ENCODE measurements at regions of chr2 and their contacts with region 1.

Region 1: GRCh38 chr2:205766779-205767359 is 84.6 kb downstream of the NRP2 start:
- DNase-seq: peak; percentile 45 to 69
- ATAC-seq: peak in 1 of 4 donors; percentile 45
- H3K4me3 ChIP-seq: no peak overlapping the region
- H3K27ac ChIP-seq: no peak overlapping the region
- H3K4me1 ChIP-seq: no peaks in the 10 kb centered on the region
- H3K27me3 ChIP-seq: peaks cover 0 to 14% (median 4%) of the 10 kb centered on the region in 3 donors
- CTCF ChIP-seq: peak; percentile 82

Region 2: GRCh38 chr2:205721057-205721449 is 45.8 kb before region 1 on chr2:
- intact Hi-C with region 1: no loop called
- DNase-seq: no peak
- ATAC-seq: no peak
- H3K4me3 ChIP-seq: no peak overlapping the region
- H3K27ac ChIP-seq: no peak overlapping the region
- H3K4me1 ChIP-seq: no peaks in the 10 kb centered on the region
- H3K27me3 ChIP-seq: no peaks in the 10 kb centered on the region
- CTCF ChIP-seq: no peak

Region 3: DNA sequence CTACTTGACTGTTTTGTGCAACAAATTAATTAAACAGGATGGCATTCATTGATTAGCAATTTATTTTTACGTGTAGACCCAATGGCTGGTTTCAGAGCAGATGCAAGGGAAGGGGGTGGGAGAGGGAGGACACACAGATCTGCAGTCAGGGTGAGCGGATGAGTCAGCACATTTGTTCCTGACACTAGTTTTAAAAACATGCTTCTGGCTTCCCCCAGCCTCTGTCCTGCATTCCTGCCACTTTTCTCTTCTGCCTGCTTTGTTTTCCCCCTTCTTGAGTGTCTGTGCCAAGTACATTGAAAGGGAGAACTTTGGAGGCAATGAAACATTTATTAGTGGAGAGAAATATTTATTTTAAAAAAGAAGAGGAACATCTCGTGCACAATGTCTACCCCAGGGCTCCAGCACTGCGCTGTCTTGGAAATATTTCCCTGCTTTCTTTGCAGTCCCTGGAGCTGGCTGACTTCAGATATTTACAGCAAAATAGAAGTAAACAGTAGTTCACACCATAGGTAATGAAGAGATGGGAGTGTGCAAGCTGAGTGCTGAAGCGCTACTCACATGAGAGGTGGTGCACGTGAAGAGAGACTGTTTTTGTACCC is 32.3 kb before region 1 on chr2:
- intact Hi-C with region 1: no loop called
- DNase-seq: no peak
- ATAC-seq: no peak
- H3K4me3 ChIP-seq: no peak overlapping the region
- H3K27ac ChIP-seq: no peak overlapping the region
- H3K4me1 ChIP-seq: peaks cover 3% of the 10 kb centered on the region
- H3K27me3 ChIP-seq: no peaks in the 10 kb centered on the region
- CTCF ChIP-seq: no peak

Region 4: DNA sequence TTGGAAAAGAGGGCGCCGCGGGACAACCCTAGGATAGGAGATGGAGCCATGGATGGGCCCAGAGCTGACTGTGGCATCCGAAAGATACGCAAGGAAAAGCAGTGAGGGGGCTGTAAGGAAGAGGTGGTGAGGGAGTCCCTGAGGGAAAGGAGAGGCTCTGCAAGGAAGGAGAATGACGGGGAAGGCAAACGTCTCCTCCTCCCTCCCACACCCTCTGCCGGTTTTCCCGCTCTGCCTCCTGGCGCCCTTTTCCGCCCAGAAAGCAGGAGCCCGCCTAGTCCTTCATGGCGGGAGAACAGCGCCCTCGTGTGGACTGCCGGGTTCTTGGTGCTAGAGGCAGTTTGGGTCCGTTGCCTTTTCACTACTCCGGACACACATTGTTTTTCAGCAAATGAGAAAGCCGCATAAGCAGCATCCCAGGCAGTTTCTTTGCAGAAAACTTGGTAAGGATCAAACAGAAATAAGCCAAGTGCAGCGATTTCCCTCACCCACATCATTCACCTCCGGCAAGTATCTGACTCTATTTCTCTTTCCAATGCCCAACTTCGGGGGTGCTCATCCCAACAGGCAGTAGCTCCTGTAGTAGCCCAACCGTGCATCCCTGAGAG is 118.7 kb after region 1 on chr2:
- intact Hi-C with region 1: loop called in 1 of 2 experiments (anchors 2 kb)
- DNase-seq: peak; percentile 78 to 91
- ATAC-seq: peak; percentile 73 to 83 (median 82)
- H3K4me3 ChIP-seq: no peak overlapping the region
- H3K27ac ChIP-seq: no peak overlapping the region
- H3K4me1 ChIP-seq: no peaks in the 10 kb centered on the region
- H3K27me3 ChIP-seq: peaks cover 0 to 1% (median 0%) of the 10 kb centered on the region in 3 donors
- CTCF ChIP-seq: peak; percentile 79

Region 5: GRCh38 chr2:205925373-205926337 is 158.8 kb after region 1 on chr2:
- intact Hi-C with region 1: loop called (anchors 5 kb)
- DNase-seq: peak; percentile 75 to 86
- ATAC-seq: peak; percentile 70 to 88 (median 82)
- H3K4me3 ChIP-seq: peak overlapping the region; percentile 51
- H3K27ac ChIP-seq: no peak overlapping the region
- H3K4me1 ChIP-seq: peaks cover 4% of the 10 kb centered on the region
- H3K27me3 ChIP-seq: peaks cover 0 to 31% (median 0%) of the 10 kb centered on the region in 3 donors
- CTCF ChIP-seq: peak; percentile 88

Region 6: GRCh38 chr2:206212673-206213513 is 446.0 kb after region 1 on chr2:
- intact Hi-C with region 1: no loop called
- DNase-seq: no peak
- ATAC-seq: no peak
- H3K4me3 ChIP-seq: peak overlapping the region; percentile 30
- H3K27ac ChIP-seq: no peak overlapping the region
- H3K4me1 ChIP-seq: peaks cover 8% of the 10 kb centered on the region
- H3K27me3 ChIP-seq: no peaks in the 10 kb centered on the region
- CTCF ChIP-seq: no peak